Esophagus muscularis mucosa (tissue), 4 donors: ENCODE measurements at regions of chr3 and their contacts with region 1.

Region 1: DNA sequence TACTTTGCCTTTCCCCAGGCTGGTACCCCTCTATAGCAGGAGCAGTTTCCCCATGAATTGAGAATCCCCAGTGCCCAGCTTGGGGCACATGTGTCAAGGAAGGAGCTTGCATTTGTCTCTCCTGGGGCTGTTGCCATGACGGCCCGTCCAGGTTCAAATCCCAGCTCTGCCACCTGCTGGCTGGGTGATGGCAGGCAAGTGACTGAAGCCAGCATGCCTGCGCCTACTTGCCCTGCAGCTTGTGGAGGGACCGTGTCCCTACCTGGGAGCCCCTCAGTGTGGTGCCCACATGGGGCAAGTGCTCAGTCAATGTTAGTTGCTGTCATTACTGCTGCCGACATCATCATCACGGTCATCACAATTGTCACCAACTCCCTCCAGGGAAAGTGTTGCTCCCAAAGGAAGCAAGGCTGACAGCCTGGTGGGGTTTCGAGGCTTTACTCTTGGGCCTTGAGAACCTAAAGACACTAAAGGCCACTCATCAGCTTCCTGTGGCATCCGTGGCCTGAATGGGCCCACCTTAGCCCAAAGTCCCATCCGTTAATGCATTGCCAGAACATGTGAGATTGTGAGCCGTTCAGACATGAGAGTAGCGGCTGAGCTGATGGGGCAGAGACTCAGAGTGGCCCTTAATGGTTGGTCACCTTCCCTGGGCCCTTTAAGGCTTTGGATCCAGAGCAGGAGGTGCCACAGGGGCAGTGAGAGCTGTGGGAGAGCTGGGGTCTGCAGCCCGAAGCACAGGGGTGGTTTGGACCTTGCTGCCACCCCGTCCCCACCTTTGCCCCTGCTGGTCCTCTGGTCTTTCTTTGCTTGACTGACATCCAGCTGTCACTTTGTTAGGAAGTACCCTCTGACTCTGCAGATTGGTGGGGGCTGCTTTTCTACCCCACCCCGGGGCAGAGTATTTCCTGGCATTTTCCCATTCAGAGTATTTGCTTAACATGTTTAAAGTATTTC is 144.3 kb downstream of the DNAJB8 start:
- DNase-seq: no peak
- H3K4me3 ChIP-seq: no peak overlapping the region
- H3K27ac ChIP-seq: no peak overlapping the region
- H3K4me1 ChIP-seq: peaks cover 0 to under 1% (median 0%) of the 10 kb centered on the region in 4 donors
- H3K27me3 ChIP-seq: no peaks in the 10 kb centered on the region
- CTCF ChIP-seq: peak; percentile 49 to 55 (median 54)
- EP300 ChIP-seq: no peak
- POLR2A ChIP-seq: no peak

Region 2: DNA sequence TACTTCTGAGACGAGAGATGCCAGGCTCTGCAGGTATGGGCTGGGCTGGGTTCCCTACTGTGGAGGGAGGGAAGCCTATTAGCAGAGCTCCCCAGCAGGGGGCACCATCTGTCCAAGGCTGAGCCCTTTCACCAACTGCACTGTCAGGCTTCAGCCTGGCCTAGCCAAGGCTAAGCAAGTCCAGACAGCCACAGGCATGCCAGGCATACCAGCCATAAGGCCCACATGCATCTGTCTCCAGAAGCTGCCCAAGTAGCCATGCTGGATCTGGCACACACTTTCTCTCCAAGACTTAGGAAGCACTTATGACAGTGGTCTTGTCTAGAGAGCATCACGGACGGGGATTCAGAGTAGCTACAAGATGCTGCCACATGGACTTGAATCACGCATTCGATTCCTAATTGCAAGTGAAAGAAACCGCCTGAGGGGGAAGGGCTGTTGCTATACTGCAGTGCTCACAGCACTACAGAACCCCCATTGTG is 227.1 kb before region 1 on chr3:
- intact Hi-C with region 1: loop called (anchors 10 kb)
- DNase-seq: no peak
- H3K4me3 ChIP-seq: no peak overlapping the region
- H3K27ac ChIP-seq: no peak overlapping the region
- H3K4me1 ChIP-seq: peaks cover 6 to 9% (median 7%) of the 10 kb centered on the region in 4 donors
- H3K27me3 ChIP-seq: no peaks in the 10 kb centered on the region
- CTCF ChIP-seq: peak; percentile 70 to 86 (median 82)
- EP300 ChIP-seq: no peak
- POLR2A ChIP-seq: no peak

Region 3: DNA sequence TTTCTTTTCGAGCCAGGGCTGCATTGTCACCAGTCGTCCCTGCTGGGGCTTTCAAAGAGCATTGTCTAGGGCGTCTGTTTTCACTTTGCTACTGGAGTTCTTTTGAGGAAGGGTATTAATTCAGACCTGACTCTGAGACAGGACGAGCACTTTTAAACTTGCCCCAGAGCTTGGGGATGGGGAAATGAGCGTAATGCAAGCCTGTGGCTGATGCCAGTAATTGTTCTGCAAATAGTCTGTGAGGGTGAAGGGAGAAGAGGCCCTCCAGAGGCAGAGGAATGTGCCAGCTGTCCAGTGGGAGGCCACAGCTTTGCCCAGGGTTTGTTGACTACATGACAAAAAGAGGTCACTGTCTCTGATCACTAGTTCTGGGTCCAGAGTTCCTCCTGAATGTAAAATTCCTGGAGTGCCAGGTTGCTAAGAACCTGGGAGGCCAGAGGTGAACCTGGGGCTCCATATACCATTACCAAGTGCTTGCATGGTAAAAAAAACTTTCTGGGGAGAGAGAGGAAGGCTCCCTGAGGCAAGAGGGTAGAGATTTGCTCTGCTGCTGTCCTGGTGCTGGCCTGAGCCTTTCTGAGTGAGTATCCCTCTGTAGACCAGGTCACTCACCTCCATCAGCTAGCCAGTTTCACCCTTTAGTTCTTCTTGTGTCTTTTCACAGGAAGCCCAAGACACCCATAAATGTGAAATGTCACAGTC is 154.2 kb before region 1 on chr3:
- intact Hi-C with region 1: loop called (anchors 10 kb)
- DNase-seq: no peak
- H3K4me3 ChIP-seq: no peak overlapping the region
- H3K27ac ChIP-seq: no peak overlapping the region
- H3K4me1 ChIP-seq: peaks cover 0 to 10% (median 7%) of the 10 kb centered on the region in 4 donors
- H3K27me3 ChIP-seq: no peaks in the 10 kb centered on the region
- CTCF ChIP-seq: no peak
- EP300 ChIP-seq: no peak
- POLR2A ChIP-seq: no peak